IMR-90 (cell line): ENCODE measurements at regions of chr18 and their contacts with region 1.

Region 1: DNA sequence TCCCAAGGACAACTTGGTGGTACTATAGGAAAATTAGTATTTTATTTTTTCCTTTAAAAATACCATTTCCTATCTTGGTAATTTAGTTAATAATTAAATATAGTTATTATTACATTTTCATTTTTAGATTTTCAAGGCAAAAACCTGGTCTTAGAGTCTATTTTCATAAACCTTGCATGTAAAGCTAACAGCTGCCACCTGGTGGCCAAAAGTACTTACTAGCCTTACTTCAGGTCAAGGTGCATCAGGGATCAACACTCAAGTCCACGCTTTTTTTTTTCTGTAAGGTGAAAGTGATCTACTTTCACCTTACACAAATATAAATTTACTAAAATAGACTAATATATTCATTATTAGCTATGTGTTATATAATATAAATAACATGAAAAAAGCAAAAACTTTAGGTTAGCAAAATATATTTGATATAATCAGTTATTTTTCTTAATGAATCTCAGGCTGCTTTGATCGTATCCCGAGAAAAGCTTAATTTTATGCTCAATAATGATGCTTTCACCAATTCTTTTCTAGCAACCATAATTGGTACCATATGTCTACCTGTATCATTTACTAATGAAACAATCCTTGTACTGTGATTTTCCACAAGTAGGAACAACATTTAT is 62.5 kb downstream of the RELCH start:
- DNase-seq: peak; percentile 83
- ATAC-seq: peak; percentile 73
- H3K4me3 ChIP-seq: no peak overlapping the region
- H3K27ac ChIP-seq: no peak overlapping the region
- H3K4me1 ChIP-seq: no peaks in the 10 kb centered on the region
- H3K27me3 ChIP-seq: no peaks in the 10 kb centered on the region
- CTCF ChIP-seq: peak; percentile 67
- POLR2A ChIP-seq: no peak
- RAD21 ChIP-seq: peak; percentile 59

Region 2: GRCh38 chr18:62226047-62226446 is 23.5 kb before region 1 on chr18:
- CTCF ChIA-PET with region 1: interaction called, 10 read pairs
- POLR2A ChIA-PET with region 1: no interaction called
- dilution Hi-C with region 1: no loop called
- in situ Hi-C with region 1: no loop called
- intact Hi-C with region 1: no loop called
- DNase-seq: no peak
- ATAC-seq: no peak
- H3K4me3 ChIP-seq: no peak overlapping the region
- H3K27ac ChIP-seq: no peak overlapping the region
- H3K4me1 ChIP-seq: no peaks in the 10 kb centered on the region
- H3K27me3 ChIP-seq: no peaks in the 10 kb centered on the region
- CTCF ChIP-seq: no peak
- POLR2A ChIP-seq: no peak
- RAD21 ChIP-seq: no peak